ENCODE measurements at regions of chr12 and their contacts with region 1.

Region 1: DNA sequence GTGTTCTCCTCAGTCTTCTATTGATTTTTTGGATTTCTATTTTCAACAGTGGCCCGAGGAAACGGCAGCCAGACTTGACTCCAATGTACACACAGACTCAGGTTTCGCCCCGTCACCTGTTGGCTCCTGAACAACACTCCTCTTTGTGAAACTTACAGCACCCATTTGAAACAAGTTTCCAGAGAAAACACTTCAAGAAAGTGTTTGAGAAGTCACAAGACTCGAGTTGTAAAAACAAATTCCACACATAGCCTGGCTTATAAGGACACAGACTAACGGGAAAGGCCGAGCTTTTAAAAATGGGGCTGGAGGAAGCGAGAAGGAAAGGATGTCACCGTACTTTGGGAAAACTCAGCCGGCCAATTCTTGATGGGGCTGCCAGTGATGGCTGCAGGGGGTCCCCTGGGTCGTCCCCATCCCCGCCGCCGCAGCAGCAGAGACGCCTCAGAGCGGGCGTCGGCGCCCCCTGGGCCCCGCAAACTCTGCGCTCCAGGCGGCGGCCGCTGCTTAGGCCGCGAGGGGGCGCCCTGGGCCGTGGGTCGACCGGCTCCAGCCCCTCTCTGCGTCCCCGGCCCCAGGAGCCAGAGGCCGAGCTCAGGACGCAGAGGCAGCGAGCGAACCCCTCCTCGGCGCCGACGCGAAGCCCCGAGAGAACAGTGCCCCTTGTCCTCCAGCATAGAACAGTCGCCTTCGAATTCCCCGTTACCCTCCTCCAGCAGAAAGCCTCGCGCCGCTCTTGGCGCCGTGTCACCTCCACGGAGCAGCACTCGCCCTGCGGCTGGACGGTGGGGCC is 106.9 kb downstream of the PRICKLE1 start:
- DNase-seq: peak; percentile 52
- H3K4me3 Mint-ChIP-seq: peak overlapping the region; percentile 71
- H3K27ac Mint-ChIP-seq: no peak overlapping the region
- H3K4me1 Mint-ChIP-seq: peaks cover 7% of the 10 kb centered on the region
- H3K27me3 Mint-ChIP-seq: peaks cover 67% of the 10 kb centered on the region

Region 2: DNA sequence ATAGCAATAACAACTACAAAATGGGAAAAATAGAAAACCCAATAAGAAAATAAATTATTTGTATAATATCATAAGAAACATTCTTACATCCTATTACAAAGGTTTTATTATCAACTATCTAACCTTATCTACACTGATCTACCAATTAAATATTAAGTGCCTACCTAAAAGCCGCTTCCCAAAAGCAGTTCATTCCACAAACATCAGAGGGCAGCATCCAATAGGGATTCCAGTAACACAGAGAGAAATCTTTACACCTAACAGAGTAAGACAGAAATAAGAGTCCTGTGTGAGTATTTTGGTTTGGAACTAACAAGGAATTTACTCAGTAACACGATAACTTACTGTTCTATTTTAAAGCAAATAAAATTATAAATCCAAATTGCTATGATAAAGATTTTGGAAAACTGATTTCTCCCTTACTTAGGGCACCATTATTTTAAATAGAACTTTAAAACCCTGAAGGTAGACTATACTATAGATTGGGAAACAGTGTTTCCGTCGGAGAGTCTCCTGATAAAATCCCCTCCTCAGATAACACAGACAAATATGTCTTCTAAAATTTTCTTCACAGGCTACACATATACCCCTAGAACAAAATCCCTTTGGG is 352.9 kb before region 1 on chr12:
- CTCF ChIA-PET with region 1: no interaction called
- intact Hi-C with region 1: loop called (anchors 5 kb)
- DNase-seq: peak; percentile 42
- H3K4me3 Mint-ChIP-seq: no peak overlapping the region
- H3K27ac Mint-ChIP-seq: no peak overlapping the region
- H3K4me1 Mint-ChIP-seq: peaks cover 41% of the 10 kb centered on the region
- H3K27me3 Mint-ChIP-seq: no peaks in the 10 kb centered on the region

Region 3: DNA sequence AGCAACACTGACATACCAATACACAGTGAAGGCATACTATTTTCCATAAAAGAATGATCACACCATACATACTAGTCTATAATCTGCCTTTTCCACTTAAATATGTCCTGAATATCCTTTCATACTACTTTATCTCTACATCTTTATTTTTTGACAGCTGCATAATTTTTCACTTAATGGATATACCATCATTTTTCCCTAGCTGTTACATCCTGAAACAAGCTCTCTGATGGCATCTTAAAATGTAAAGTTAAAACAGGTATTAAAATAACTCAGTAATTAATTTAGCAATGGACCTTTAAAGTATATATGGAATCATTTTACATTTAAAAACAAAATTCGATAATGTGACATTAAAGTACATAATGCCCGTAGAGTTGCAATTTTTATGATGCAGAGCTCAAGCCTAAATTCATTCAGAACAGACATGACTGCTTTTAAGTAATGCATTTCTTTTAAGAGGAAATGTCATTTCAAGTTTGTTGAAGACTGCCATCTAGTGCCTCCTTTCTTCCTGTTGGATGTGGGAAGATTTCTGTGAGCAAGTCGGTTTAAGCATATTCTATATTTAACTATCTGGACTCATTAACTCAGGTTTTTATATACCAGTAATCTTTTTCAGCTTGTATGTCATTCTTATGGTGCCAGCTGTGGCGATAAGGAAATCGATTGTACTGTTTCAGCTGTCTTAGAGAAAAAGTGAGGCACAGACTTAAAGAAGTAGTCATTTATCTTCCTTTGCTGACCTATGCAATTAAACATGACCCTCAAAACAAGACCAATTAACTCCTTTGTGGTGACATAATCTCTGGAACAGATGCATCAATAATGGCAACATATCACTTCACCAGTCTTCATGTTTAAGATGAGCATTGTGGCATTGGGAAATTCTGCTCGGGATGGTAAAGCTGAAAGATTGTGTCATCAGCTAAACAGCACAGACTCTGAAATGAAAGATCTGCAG is 86.6 kb after region 1 on chr12:
- CTCF ChIA-PET with region 1: interaction called, 33 read pairs
- intact Hi-C with region 1: loop called (anchors 1 kb)
- DNase-seq: no peak
- H3K4me3 Mint-ChIP-seq: no peak overlapping the region
- H3K27ac Mint-ChIP-seq: no peak overlapping the region
- H3K4me1 Mint-ChIP-seq: no peaks in the 10 kb centered on the region
- H3K27me3 Mint-ChIP-seq: peaks cover 2% of the 10 kb centered on the region

Region 4: GRCh38 chr12:43282106-43282505 is 799.5 kb after region 1 on chr12:
- CTCF ChIA-PET with region 1: no interaction called
- intact Hi-C with region 1: loop called (anchors 5 kb)
- DNase-seq: no peak
- H3K4me3 Mint-ChIP-seq: no peak overlapping the region
- H3K27ac Mint-ChIP-seq: no peak overlapping the region
- H3K4me1 Mint-ChIP-seq: no peaks in the 10 kb centered on the region
- H3K27me3 Mint-ChIP-seq: no peaks in the 10 kb centered on the region

Region 5: GRCh38 chr12:43338848-43339526 is 856.3 kb after region 1 on chr12:
- CTCF ChIA-PET with region 1: no interaction called
- intact Hi-C with region 1: loop called (anchors 2 kb)
- DNase-seq: no peak
- H3K4me3 Mint-ChIP-seq: no peak overlapping the region
- H3K27ac Mint-ChIP-seq: no peak overlapping the region
- H3K4me1 Mint-ChIP-seq: no peaks in the 10 kb centered on the region
- H3K27me3 Mint-ChIP-seq: peaks cover 2% of the 10 kb centered on the region

Region 6: GRCh38 chr12:43676183-43676813 is 1193.7 kb after region 1 on chr12:
- CTCF ChIA-PET with region 1: no interaction called
- intact Hi-C with region 1: loop called (anchors 2 kb)
- DNase-seq: peak; percentile 33
- H3K4me3 Mint-ChIP-seq: no peak overlapping the region
- H3K27ac Mint-ChIP-seq: no peak overlapping the region
- H3K4me1 Mint-ChIP-seq: no peaks in the 10 kb centered on the region
- H3K27me3 Mint-ChIP-seq: peaks cover 10% of the 10 kb centered on the region

Region 7: GRCh38 chr12:43728117-43728516 is 1245.5 kb after region 1 on chr12:
- CTCF ChIA-PET with region 1: no interaction called
- intact Hi-C with region 1: loop called (anchors 2 kb)
- DNase-seq: no peak
- H3K4me3 Mint-ChIP-seq: no peak overlapping the region
- H3K27ac Mint-ChIP-seq: no peak overlapping the region
- H3K4me1 Mint-ChIP-seq: peaks cover 13% of the 10 kb centered on the region
- H3K27me3 Mint-ChIP-seq: no peaks in the 10 kb centered on the region

Measured in activated naive CD4-positive, alpha-beta T cell treated with anti-CD3 and anti-CD28 coated beads for 36 hours (primary cell).